ENCODE measurements at regions of chr19 and their contacts with region 1.

Region 1: GRCh38 chr19:16382775-16383543 is 58.3 kb downstream of the KLF2 start:
- DNase-seq: peak; percentile 63
- H3K4me3 Mint-ChIP-seq: no peak overlapping the region
- H3K27ac Mint-ChIP-seq: no peak overlapping the region
- H3K4me1 Mint-ChIP-seq: peaks cover 30% of the 10 kb centered on the region
- H3K27me3 Mint-ChIP-seq: no peaks in the 10 kb centered on the region

Region 2: DNA sequence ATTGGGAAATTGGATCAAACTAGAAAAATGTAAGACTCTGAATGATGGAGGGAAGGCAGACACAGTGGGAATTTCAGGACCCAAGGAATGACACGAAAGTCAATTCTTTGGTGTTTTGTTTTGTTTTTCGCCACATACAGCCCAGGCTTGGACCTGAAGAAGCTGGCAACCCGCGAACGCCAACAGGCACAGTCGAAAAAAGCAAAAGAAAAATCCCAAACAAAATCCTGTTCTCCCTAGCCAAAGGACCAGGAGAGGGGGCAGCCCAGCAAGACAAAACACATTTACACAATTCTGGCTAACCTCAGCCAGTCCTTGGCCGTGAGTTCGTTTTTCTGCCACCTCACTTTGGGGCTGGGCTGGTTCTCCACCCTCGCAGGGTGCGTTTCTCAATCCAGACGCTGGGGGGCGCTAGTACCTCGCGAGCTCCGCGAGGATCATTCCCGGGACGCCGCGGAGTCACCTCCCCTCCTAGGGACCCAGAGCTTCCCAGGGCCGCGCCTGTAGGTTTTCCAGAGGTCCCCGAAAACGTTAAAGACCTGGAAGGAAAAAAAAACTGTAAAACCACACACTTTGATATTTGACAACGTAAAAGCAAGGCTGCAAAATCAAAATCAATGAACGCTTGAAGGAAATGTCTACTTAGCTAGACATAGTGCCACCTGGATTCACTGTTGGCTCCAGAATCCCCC is 341.5 kb before region 1 on chr19:
- intact Hi-C with region 1: loop called (anchors 10 kb)
- DNase-seq: peak; percentile 65
- H3K4me3 Mint-ChIP-seq: peak overlapping the region; percentile 17
- H3K27ac Mint-ChIP-seq: no peak overlapping the region
- H3K4me1 Mint-ChIP-seq: peaks cover 8% of the 10 kb centered on the region
- H3K27me3 Mint-ChIP-seq: peaks cover 6% of the 10 kb centered on the region

Region 3: GRCh38 chr19:16247353-16248182 is 135.4 kb before region 1 on chr19:
- intact Hi-C with region 1: loop called (anchors 1 kb)
- DNase-seq: peak; percentile 71
- H3K4me3 Mint-ChIP-seq: no peak overlapping the region
- H3K27ac Mint-ChIP-seq: no peak overlapping the region
- H3K4me1 Mint-ChIP-seq: peaks cover 14% of the 10 kb centered on the region
- H3K27me3 Mint-ChIP-seq: peaks cover 12% of the 10 kb centered on the region

Region 4: DNA sequence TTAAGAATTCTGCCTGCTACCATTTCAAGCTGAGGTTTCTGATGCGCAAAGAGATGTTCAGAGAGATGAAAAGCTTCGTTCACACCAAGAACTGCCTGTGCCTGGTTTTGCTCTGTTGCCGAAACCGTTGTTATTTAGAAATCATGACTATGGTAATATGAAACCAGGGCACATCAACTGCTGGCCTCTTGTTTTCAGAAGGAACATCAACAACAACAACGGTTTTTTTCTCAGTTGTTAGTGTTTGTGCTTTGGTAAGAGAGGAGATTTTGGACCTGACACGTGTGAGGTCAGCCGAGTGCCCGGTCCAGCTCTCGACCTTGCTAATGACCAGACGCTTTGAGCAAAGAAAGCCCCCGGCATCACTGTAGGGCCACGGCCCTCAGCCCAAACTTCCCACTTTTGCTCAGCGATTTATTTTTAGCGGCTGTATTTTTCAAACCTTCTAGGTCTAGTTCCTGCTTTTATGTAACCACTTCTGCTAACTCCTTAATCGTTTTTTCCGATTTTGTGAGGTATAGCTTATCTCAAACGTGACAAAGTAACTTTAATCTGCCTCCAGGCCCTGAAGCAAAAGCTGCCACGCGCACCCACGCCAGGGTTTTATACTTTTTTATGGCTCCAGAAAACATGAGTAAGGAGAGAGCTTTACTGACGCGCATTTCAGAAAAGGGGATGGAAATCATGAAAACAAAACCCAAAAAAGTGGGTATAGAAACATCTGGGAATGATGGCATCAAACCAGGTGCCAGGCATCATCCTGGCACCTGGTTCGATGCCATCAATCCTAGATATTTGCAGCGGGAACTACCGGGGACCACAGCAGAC is 16.3 kb before region 1 on chr19:
- intact Hi-C with region 1: no loop called
- DNase-seq: peak; percentile 45
- H3K4me3 Mint-ChIP-seq: peak overlapping the region; percentile 64
- H3K27ac Mint-ChIP-seq: peak overlapping the region; percentile 77
- H3K4me1 Mint-ChIP-seq: peaks cover 40% of the 10 kb centered on the region
- H3K27me3 Mint-ChIP-seq: peaks cover 6% of the 10 kb centered on the region

Region 5: GRCh38 chr19:16403151-16403977 is 20.4 kb after region 1 on chr19:
- intact Hi-C with region 1: no loop called
- DNase-seq: no peak
- H3K4me3 Mint-ChIP-seq: no peak overlapping the region
- H3K27ac Mint-ChIP-seq: no peak overlapping the region
- H3K4me1 Mint-ChIP-seq: peaks cover 4% of the 10 kb centered on the region
- H3K27me3 Mint-ChIP-seq: no peaks in the 10 kb centered on the region

Region 6: DNA sequence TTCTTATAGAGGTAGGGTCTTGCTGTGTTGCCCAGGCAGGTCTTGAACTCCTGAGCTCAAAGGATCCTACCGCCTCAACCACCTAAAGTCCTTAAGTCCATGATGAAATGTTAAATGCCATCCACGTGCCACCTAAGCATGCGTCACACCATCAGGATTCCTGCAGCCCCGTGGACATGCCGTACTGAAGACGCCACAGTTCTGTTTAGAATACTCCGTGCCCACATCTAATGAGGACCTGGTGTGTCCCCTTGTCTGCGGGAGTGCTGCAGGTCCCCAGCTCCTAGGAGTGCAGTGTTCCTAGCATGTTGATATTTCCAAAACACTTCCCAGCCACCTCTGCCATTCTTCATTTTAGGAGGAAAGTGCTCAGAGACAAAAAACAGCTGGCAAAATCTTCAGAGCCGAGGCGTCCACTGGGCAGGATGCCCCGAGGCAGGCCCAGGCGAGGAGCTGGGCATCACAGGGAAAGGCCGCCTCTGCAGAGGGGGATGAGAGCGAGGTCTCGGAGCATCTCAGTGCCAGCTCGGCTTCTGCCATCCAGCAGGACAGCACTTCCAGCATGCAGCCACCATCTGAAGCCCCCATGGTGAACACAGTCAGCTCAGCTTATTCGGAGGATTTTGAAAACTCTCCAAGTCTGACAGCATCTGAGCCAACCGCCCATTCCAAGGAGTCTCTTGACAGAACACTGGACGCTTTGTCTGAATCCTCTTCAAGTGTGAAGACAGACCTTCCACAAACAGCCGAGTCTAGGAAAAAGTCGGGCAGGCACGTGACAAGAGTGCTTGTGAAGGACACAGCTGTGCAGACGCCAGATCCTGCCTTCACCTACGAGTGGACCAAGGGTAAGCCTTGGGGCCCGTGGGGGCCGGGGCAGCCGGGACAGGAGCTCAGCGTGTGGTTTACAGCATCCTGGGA is 126.4 kb after region 1 on chr19:
- intact Hi-C with region 1: no loop called
- DNase-seq: no peak
- H3K4me3 Mint-ChIP-seq: no peak overlapping the region
- H3K27ac Mint-ChIP-seq: no peak overlapping the region
- H3K4me1 Mint-ChIP-seq: no peaks in the 10 kb centered on the region
- H3K27me3 Mint-ChIP-seq: no peaks in the 10 kb centered on the region

Region 7: GRCh38 chr19:16528073-16528472 is 145.1 kb after region 1 on chr19:
- intact Hi-C with region 1: no loop called
- DNase-seq: peak; percentile 30
- H3K4me3 Mint-ChIP-seq: no peak overlapping the region
- H3K27ac Mint-ChIP-seq: no peak overlapping the region
- H3K4me1 Mint-ChIP-seq: no peaks in the 10 kb centered on the region
- H3K27me3 Mint-ChIP-seq: no peaks in the 10 kb centered on the region